Activated CD4-positive, alpha-beta memory T cell treated with anti-CD3 and anti-CD28 coated beads, Interleukin-2, amount 10 ng/mL, durations not matched to agents 7 days and 5 days (primary cell): ENCODE measurements at regions of chr7 and their contacts with region 1.

Region 1: GRCh38 chr7:36318116-36318515 is 71.5 kb upstream of the ANLN start:
- DNase-seq: no peak
- H3K4me3 Mint-ChIP-seq: no peak overlapping the region
- H3K27ac Mint-ChIP-seq: no peak overlapping the region
- H3K4me1 Mint-ChIP-seq: peaks cover 3% of the 10 kb centered on the region
- H3K27me3 Mint-ChIP-seq: peaks cover 9% of the 10 kb centered on the region

Region 2: GRCh38 chr7:35985126-35985754 is 332.9 kb before region 1 on chr7:
- CTCF ChIA-PET with region 1: interaction called, 35 read pairs
- POLR2A ChIA-PET with region 1: no interaction called
- DNase-seq: peak; percentile 77
- H3K4me3 Mint-ChIP-seq: no peak overlapping the region
- H3K27ac Mint-ChIP-seq: no peak overlapping the region
- H3K4me1 Mint-ChIP-seq: no peaks in the 10 kb centered on the region
- H3K27me3 Mint-ChIP-seq: no peaks in the 10 kb centered on the region

Region 3: DNA sequence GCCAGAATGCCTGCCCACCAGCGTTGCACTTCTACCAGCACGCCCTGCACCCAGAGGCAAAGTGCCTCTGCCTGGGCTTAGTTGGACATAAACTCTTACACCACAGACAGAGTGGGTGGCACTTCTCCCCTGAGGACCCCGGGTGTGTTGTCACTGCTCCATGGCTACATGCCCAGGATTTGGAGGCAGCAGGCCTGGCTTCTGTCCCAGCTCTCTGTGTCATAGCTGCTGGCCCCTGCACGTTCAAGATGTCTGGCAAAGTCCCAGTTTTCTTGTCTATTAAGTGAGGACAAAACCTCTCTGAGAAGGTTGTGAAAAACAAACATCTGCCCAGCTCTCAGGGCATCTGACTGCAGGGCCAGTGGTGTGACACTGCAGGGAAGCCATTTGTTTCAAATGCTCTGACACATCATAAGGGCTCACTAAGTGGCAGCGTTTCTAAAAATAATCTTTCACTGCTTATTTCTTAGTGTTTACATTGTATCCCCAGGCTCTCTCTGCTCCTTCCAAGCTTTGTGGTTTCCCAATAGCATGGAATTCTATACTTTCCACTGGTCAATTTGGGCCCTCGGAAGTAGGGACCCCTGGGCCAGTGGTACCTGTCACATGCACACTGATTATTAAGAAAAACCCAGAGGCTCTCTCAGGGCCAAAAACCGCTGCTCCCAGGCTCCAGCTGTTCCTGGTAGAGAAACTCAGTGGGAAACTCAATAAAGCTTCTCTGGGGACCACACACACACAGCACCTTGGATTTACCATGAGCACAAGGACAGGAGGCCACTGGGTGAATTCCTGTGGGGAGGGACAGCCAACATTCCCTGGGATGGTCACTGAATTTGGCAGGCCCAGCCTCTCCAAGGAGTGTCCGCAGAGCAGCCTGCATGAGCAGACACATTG is 14.7 kb before region 1 on chr7:
- CTCF ChIA-PET with region 1: interaction called, 19 read pairs
- POLR2A ChIA-PET with region 1: no interaction called
- DNase-seq: no peak
- H3K4me3 Mint-ChIP-seq: no peak overlapping the region
- H3K27ac Mint-ChIP-seq: no peak overlapping the region
- H3K4me1 Mint-ChIP-seq: no peaks in the 10 kb centered on the region
- H3K27me3 Mint-ChIP-seq: no peaks in the 10 kb centered on the region

Region 4: GRCh38 chr7:36336390-36336789 is 18.3 kb after region 1 on chr7:
- CTCF ChIA-PET with region 1: interaction called, 12 read pairs
- POLR2A ChIA-PET with region 1: no interaction called
- DNase-seq: no peak
- H3K4me3 Mint-ChIP-seq: no peak overlapping the region
- H3K27ac Mint-ChIP-seq: no peak overlapping the region
- H3K4me1 Mint-ChIP-seq: no peaks in the 10 kb centered on the region
- H3K27me3 Mint-ChIP-seq: peaks cover 5% of the 10 kb centered on the region

Region 5: GRCh38 chr7:36379831-36380504 is 61.9 kb after region 1 on chr7:
- CTCF ChIA-PET with region 1: no interaction called
- POLR2A ChIA-PET with region 1: no interaction called
- DNase-seq: no peak
- H3K4me3 Mint-ChIP-seq: no peak overlapping the region
- H3K27ac Mint-ChIP-seq: no peak overlapping the region
- H3K4me1 Mint-ChIP-seq: peaks cover 15% of the 10 kb centered on the region
- H3K27me3 Mint-ChIP-seq: peaks cover 38% of the 10 kb centered on the region

Region 6: GRCh38 chr7:36423633-36424032 is 105.5 kb after region 1 on chr7:
- CTCF ChIA-PET with region 1: no interaction called
- POLR2A ChIA-PET with region 1: no interaction called
- DNase-seq: no peak
- H3K4me3 Mint-ChIP-seq: no peak overlapping the region
- H3K27ac Mint-ChIP-seq: no peak overlapping the region
- H3K4me1 Mint-ChIP-seq: no peaks in the 10 kb centered on the region
- H3K27me3 Mint-ChIP-seq: no peaks in the 10 kb centered on the region